ENCODE measurements at regions of chr5 and their contacts with region 1.

Region 1: GRCh38 chr5:66306105-66306843 is 162.2 kb downstream of the SREK1 start:
- DNase-seq: peak; percentile 86
- H3K27ac ChIP-seq: no peak overlapping the region
- CTCF ChIP-seq: peak; percentile 94

Region 2: DNA sequence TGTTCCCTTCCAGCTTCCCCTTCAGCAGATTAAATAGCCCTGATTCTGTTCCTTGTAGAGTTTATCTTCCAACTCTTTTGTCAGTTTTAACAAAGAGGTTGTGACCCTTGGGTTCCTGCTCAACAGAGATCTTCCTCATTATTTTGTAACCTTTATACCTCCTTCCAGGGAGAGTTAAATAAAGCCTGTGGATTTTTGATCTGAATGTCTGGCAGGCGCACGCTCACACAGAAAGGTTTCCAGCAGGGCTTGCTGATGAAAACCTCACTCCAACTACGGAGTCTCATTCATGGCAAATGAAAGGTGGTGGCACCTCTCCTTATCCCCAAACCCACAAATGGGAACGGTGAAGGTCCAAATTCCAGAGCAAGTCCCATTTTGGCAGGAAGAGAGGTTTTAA is 33.2 kb before region 1 on chr5:
- CTCF ChIA-PET with region 1: no interaction called
- POLR2A ChIA-PET with region 1: no interaction called
- DNase-seq: no peak
- H3K27ac ChIP-seq: no peak overlapping the region
- CTCF ChIP-seq: no peak

Region 3: GRCh38 chr5:66742083-66742895 is 436.0 kb after region 1 on chr5:
- CTCF ChIA-PET with region 1: interaction called, 20 read pairs
- POLR2A ChIA-PET with region 1: no interaction called
- DNase-seq: no peak
- H3K27ac ChIP-seq: no peak overlapping the region
- CTCF ChIP-seq: no peak

Region 4: DNA sequence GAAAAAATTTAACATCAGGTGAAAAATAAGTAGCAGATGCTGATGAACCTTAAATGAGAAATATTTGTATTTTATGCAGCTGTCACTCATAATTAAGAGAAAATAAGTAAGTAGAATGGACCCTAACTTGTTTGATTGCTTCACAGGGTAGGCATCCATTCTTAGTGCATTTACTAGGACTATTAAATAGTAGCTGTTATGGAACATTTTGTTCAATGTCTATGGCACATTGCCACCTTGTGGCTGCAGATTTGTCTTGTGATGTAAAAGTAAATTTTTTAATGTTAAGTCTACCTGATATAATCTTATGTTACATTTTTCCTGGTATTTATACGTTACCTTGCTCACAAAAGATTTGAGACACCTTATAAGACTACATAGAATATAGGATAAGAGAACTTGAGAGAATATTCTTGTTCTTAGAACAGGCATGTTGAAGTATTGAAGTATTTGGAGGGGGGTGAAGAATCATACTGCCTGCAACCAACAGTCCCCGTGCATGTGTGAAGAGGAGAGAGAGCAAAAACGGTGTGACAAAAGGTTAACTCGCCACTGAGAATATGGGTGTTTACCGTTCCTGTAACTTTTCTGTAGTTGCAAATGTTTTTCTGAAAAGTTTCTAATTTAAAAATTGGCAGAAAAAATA is 451.0 kb after region 1 on chr5:
- CTCF ChIA-PET with region 1: interaction called, 68 read pairs
- POLR2A ChIA-PET with region 1: no interaction called
- DNase-seq: peak; percentile 54
- H3K27ac ChIP-seq: no peak overlapping the region
- CTCF ChIP-seq: peak; percentile 62